Activated CD4-positive, alpha-beta memory T cell treated with anti-CD3 and anti-CD28 coated beads, Interleukin-2, amount 10 ng/mL, durations not matched to agents 7 days and 5 days (primary cell): ENCODE measurements at regions of chr11 and their contacts with region 1.

Region 1: GRCh38 chr11:61111786-61112517 is 9.7 kb downstream of the CD5 start:
- DNase-seq: peak; percentile 84
- H3K4me3 Mint-ChIP-seq: no peak overlapping the region
- H3K27ac Mint-ChIP-seq: peak overlapping the region; percentile 96
- H3K4me1 Mint-ChIP-seq: peaks cover 98% of the 10 kb centered on the region
- H3K27me3 Mint-ChIP-seq: no peaks in the 10 kb centered on the region

Region 2: DNA sequence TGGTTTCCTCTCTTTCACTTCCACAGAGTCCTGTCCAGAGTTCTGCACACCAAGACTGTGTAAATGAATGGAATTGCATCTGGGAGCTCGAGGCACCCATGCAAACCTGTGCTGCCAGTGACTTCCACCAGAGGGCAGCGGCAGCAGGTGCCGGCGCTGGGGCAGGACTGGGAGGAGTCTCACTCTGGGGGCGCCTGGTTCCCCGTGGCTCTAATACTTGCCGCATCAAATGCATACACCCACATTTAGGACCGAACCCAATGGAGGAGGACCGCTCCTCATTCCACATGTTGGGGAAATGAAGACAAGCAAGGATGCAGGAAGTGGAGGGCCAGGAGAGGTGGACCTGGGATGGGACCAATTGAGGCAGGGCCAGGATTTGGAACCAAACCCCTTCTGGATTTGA is 141.6 kb before region 1 on chr11:
- CTCF ChIA-PET with region 1: interaction called, 14 read pairs
- POLR2A ChIA-PET with region 1: no interaction called
- DNase-seq: peak; percentile 85
- H3K4me3 Mint-ChIP-seq: peak overlapping the region; percentile 88
- H3K27ac Mint-ChIP-seq: peak overlapping the region; percentile 50
- H3K4me1 Mint-ChIP-seq: peaks cover 26% of the 10 kb centered on the region
- H3K27me3 Mint-ChIP-seq: peaks cover 12% of the 10 kb centered on the region

Region 3: GRCh38 chr11:60985991-60986915 is 125.7 kb before region 1 on chr11:
- CTCF ChIA-PET with region 1: interaction called, 7 read pairs
- POLR2A ChIA-PET with region 1: interaction called, 38 read pairs
- DNase-seq: peak; percentile 90
- H3K4me3 Mint-ChIP-seq: peak overlapping the region; percentile 80
- H3K27ac Mint-ChIP-seq: peak overlapping the region; percentile 99
- H3K4me1 Mint-ChIP-seq: peaks cover 91% of the 10 kb centered on the region
- H3K27me3 Mint-ChIP-seq: no peaks in the 10 kb centered on the region

Region 4: GRCh38 chr11:61028272-61028761 is 83.6 kb before region 1 on chr11:
- CTCF ChIA-PET with region 1: no interaction called
- POLR2A ChIA-PET with region 1: interaction called, 14 read pairs
- DNase-seq: peak; percentile 62
- H3K4me3 Mint-ChIP-seq: peak overlapping the region; percentile 72
- H3K27ac Mint-ChIP-seq: peak overlapping the region; percentile 86
- H3K4me1 Mint-ChIP-seq: peaks cover 88% of the 10 kb centered on the region
- H3K27me3 Mint-ChIP-seq: no peaks in the 10 kb centered on the region

Region 5: GRCh38 chr11:61071208-61071681 is 40.7 kb before region 1 on chr11:
- CTCF ChIA-PET with region 1: interaction called, 4 read pairs
- POLR2A ChIA-PET with region 1: interaction called, 134 read pairs
- DNase-seq: peak; percentile 83
- H3K4me3 Mint-ChIP-seq: peak overlapping the region; percentile 40
- H3K27ac Mint-ChIP-seq: peak overlapping the region; percentile 93
- H3K4me1 Mint-ChIP-seq: peaks cover 91% of the 10 kb centered on the region
- H3K27me3 Mint-ChIP-seq: no peaks in the 10 kb centered on the region

Region 6: DNA sequence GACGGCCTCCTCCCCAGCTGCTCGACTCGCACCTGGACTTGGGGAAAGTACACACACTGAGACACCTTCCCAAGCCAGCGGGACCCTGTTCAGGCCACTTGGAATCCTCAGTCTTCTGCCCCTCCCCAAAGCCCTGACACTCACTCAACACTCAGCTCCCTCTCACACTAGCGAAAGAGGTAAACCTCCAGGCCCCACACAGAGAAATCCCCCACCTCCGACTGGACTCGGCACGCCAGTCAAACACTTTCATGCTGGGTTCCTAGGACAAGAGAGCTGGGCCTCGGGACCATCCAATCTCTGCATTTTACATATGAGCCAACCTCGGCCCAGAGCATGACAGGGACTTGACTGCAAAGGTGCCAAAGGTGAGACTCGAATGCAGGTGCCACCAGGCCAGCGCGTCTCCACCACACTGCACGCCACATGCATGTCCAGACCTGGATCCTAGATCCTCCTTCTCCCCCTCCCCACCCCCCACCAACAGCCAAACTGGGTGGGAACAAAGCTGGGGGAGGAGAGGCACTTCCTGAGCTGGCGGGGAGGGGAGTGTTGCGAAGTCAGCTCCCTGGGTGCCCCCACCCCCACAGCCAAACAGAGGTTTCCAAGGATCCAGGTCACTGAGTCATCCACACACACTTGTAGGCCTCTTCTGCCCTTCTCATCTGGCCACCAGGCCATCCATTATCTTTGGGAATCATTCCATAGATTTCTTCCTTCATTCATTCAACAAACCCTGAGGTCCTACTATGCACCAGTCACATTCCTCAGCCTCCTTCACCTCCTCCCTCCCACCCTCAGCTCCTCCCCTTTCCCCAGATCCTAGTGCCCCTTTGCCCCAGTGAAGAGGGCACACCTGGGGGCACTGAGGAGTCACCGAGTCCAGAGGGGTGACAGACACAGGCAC is 20.3 kb before region 1 on chr11:
- CTCF ChIA-PET with region 1: no interaction called
- POLR2A ChIA-PET with region 1: interaction called, 70 read pairs
- DNase-seq: peak; percentile 54
- H3K4me3 Mint-ChIP-seq: peak overlapping the region; percentile 77
- H3K27ac Mint-ChIP-seq: peak overlapping the region; percentile 96
- H3K4me1 Mint-ChIP-seq: peaks cover 69% of the 10 kb centered on the region
- H3K27me3 Mint-ChIP-seq: no peaks in the 10 kb centered on the region